Mammary epithelial cell (primary cell): ENCODE measurements at regions of chr12 and their contacts with region 1.

Region 1: GRCh38 chr12:7018350-7019042 is at the start of gene LPCAT3:
- DNase-seq: peak; percentile 96
- H3K4me3 ChIP-seq: peak within 1 kb of the TSS; percentile 81 to 95 (median 84)
- H3K27ac ChIP-seq: peak within 1 kb of the TSS; percentile 38
- H3K4me1 ChIP-seq: peaks cover 20% of the 10 kb centered on the region
- H3K27me3 ChIP-seq: no peaks in the 10 kb centered on the region
- CTCF ChIP-seq: peak; percentile 55 to 91
- total RNA-seq, gene LPCAT3: 22.8 to 31.3 TPM

Region 2: GRCh38 chr12:6944381-6945186 is 73.9 kb before region 1 on chr12:
- CTCF ChIA-PET with region 1: interaction called, 5 read pairs
- dilution Hi-C with region 1: no loop called
- in situ Hi-C with region 1: no loop called
- intact Hi-C with region 1: loop called (anchors 1 kb)
- DNase-seq: no peak
- H3K4me3 ChIP-seq: peak overlapping the region; percentile 36 to 64 (median 47)
- H3K27ac ChIP-seq: peak overlapping the region; percentile 94
- H3K4me1 ChIP-seq: peaks cover 29% of the 10 kb centered on the region
- H3K27me3 ChIP-seq: no peaks in the 10 kb centered on the region
- CTCF ChIP-seq: peak; percentile 55 to 77

Region 3: DNA sequence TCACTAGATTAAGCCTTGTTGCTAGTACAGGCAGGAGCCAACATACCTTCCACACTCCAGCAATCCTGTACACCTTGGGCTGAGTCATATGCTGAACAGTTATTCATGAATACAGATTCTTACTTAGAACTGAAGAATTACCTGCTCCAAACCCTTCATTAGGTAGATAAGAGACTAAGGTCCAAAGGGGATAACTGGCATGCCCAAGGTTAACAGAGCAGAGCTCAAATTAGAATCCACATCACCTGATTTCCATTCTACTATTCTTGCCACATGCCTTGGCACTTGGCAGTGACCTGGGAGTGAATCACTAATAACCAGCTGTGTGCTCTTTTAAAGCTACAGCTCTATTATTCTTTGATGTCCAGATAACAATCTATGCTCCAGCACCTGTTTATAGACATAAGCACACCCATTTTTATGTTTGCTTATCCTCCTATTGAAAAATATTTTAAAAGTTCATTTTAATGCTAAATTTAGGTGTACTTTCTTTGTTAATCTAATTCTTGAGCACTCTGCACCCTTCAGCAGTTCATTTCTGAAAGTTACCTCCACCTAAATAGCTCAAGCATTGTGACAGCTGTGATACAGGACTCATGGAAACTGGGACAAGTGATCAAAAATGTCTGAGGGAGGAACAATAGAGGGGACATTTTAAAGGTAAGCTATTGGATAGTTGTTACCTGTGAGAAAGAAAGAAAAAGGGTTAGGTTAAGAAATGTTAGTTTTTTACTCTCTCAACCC is 19.6 kb before region 1 on chr12:
- CTCF ChIA-PET with region 1: no interaction called
- dilution Hi-C with region 1: no loop called
- in situ Hi-C with region 1: no loop called
- intact Hi-C with region 1: loop called (anchors 1 kb)
- DNase-seq: peak; percentile 63
- H3K4me3 ChIP-seq: no peak overlapping the region
- H3K27ac ChIP-seq: no peak overlapping the region
- H3K4me1 ChIP-seq: peaks cover 24% of the 10 kb centered on the region
- H3K27me3 ChIP-seq: no peaks in the 10 kb centered on the region
- CTCF ChIP-seq: no peak

Region 4: DNA sequence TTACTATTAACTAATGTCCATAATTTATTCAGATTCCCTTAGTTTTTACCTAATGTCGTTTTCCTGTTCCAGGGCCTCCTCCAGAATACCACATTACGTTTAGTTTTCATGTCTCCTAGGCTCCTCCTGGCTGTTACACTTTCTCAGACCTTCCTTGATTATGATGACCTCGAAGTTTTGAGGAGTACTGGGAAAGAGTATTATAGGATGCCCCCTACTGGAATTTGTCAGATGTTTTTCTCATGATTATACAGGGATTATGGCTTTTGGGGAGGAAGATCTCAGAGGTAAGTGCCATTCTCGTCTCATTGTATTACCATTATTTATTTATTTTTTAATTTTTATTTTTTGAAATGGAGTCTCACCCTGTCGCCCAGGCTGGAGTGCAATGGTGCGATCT is 24.3 kb after region 1 on chr12:
- CTCF ChIA-PET with region 1: no interaction called
- dilution Hi-C with region 1: no loop called
- in situ Hi-C with region 1: no loop called
- intact Hi-C with region 1: loop called (anchors 2 kb)
- DNase-seq: peak; percentile 52
- H3K4me3 ChIP-seq: no peak overlapping the region
- H3K27ac ChIP-seq: no peak overlapping the region
- H3K4me1 ChIP-seq: peaks cover 13% of the 10 kb centered on the region
- H3K27me3 ChIP-seq: no peaks in the 10 kb centered on the region
- CTCF ChIP-seq: peak; percentile 40 to 56

Region 5: DNA sequence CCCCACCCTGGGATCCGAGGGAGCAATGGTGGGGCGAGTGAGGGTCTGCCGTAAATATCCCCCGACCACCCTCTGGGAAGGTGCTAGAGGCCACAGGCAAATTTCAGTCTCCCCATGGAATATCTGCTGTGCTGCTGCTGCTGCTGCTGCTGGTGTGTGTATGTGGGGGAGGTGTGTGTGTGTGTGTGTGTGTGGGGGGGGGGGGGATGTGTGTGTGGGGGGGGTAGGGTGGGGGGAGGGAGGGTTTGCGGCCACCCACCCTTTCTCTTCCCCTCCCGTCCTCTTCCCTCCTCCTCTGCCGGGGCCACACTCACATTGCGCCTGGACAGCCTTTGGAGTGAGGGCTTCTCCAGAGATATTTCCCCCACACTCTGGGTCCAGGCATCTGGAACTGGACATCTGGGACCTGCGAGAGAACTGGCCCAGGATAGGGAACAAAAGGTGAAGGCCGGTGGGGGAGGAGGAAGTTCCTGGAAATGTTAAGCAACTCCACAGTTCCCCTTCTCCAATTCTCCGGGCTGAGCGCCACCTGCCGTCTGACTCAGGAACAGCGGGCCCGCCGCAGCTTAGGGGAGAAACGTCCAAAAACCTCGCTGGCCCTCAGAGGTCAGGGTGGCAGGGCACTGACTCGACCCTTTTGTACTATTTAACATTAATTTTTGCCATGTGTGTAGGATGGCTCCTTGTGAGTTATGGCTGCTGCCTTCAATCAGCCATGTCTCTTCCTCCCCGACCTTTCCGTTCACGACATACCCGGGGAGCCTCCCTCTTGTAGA is 90.5 kb after region 1 on chr12 and contains the start of gene C1RL:
- CTCF ChIA-PET with region 1: interaction called, 5 read pairs
- dilution Hi-C with region 1: no loop called
- in situ Hi-C with region 1: no loop called
- intact Hi-C with region 1: loop called (anchors 1 kb)
- DNase-seq: peak; percentile 75
- H3K4me3 ChIP-seq: peak within 1 kb of the TSS; percentile 75 to 80 (median 76)
- H3K27ac ChIP-seq: peak within 1 kb of the TSS; percentile 81
- H3K4me1 ChIP-seq: peaks cover 23% of the 10 kb centered on the region
- H3K27me3 ChIP-seq: no peaks in the 10 kb centered on the region
- CTCF ChIP-seq: peak; percentile 96 to 99
- total RNA-seq, gene C1RL: 32.1 to 38.3 TPM